CD4-positive, alpha-beta T cell (primary cell): ENCODE measurements at regions of chr6 and their contacts with region 1.

Region 1: GRCh38 chr6:42745707-42746462 is at the start of gene TBCC:
- DNase-seq: peak; percentile 86 to 98 (median 92)
- ATAC-seq: peak; percentile 77
- H3K4me3 ChIP-seq: peak within 1 kb of the TSS; percentile 96
- H3K4me3 Mint-ChIP-seq: peak within 1 kb of the TSS; percentile 100
- H3K27ac ChIP-seq: peak within 1 kb of the TSS; percentile 89 to 94
- H3K27ac Mint-ChIP-seq: peak within 1 kb of the TSS; percentile 96
- H3K4me1 ChIP-seq: peaks cover 43% of the 10 kb centered on the region
- H3K4me1 Mint-ChIP-seq: peaks cover 35% of the 10 kb centered on the region
- H3K27me3 ChIP-seq: no peaks in the 10 kb centered on the region
- H3K27me3 Mint-ChIP-seq: no peaks in the 10 kb centered on the region
- CTCF ChIP-seq: no peak
- total RNA-seq, gene TBCC: 67.3 to 68.3 TPM

Region 2: GRCh38 chr6:42661540-42662153 is 84.2 kb before region 1 on chr6:
- CTCF ChIA-PET with region 1: interaction called, 5 read pairs
- POLR2A ChIA-PET with region 1: interaction called, 16 read pairs
- intact Hi-C with region 1: no loop called
- DNase-seq: peak; percentile 75 to 91 (median 85)
- ATAC-seq: peak; percentile 100
- H3K4me3 ChIP-seq: no peak overlapping the region
- H3K4me3 Mint-ChIP-seq: no peak overlapping the region
- H3K27ac ChIP-seq: no peak overlapping the region
- H3K27ac Mint-ChIP-seq: no peak overlapping the region
- H3K4me1 ChIP-seq: no peaks in the 10 kb centered on the region
- H3K4me1 Mint-ChIP-seq: no peaks in the 10 kb centered on the region
- H3K27me3 ChIP-seq: no peaks in the 10 kb centered on the region
- H3K27me3 Mint-ChIP-seq: no peaks in the 10 kb centered on the region
- CTCF ChIP-seq: peak; percentile 90

Region 3: DNA sequence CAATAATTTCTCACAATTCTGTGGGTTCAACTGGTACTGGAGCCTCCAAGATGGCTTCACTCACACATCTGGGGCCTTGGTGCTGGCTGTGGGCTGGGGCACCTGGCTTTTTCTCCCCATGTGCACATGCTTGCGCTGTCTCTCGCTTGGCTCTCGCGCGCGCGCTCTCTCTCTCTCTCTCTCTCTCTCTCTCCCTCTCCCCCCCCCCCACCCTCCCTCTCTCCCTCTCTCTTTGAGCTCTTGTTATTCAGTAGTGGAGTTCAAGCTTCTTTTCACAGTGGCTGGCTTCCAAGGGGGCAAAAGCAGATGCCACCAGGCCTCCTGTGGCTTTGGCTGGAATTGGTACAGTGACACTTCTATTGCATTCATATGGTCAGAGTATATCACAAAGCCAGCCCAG is 10.8 kb after region 1 on chr6:
- CTCF ChIA-PET with region 1: interaction called, 4 read pairs
- POLR2A ChIA-PET with region 1: interaction called, 61 read pairs
- intact Hi-C with region 1: no loop called
- DNase-seq: no peak
- ATAC-seq: no peak
- H3K4me3 ChIP-seq: no peak overlapping the region
- H3K4me3 Mint-ChIP-seq: no peak overlapping the region
- H3K27ac ChIP-seq: no peak overlapping the region
- H3K27ac Mint-ChIP-seq: no peak overlapping the region
- H3K4me1 ChIP-seq: peaks cover 7% of the 10 kb centered on the region
- H3K4me1 Mint-ChIP-seq: peaks cover 57% of the 10 kb centered on the region
- H3K27me3 ChIP-seq: no peaks in the 10 kb centered on the region
- H3K27me3 Mint-ChIP-seq: no peaks in the 10 kb centered on the region
- CTCF ChIP-seq: no peak

Region 4: DNA sequence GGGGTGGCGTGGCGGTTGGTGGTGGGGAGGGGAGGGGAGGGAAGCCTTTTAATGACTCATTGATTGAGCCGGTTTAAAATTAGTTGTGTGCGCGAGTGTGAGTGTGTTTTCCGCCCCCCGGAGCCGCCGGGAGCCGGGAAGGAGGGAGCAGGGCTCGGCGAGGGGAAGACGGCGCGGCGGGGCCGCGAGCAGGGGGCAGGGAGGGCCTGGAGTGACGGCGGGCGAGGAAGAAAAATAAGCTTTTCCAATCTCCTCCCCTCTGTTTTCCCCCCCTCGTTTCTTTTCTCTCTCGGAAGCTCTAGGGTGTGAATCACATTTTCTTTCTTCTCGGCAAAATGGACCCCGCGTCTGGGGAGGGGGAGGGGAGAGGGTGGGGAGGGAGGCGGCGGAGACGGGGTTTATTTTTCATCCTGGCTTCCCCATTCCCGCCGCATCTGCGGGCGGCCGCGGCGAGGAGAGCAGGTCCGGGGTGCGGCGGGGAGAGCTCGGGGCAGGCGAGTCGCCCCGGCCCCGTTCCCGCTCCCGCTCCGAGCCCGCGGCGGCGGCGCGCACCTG is 36.8 kb after region 1 on chr6:
- CTCF ChIA-PET with region 1: interaction called, 6 read pairs
- POLR2A ChIA-PET with region 1: interaction called, 1,427 read pairs
- intact Hi-C with region 1: loop called (anchors 1 kb)
- DNase-seq: peak; percentile 69 to 90 (median 77)
- ATAC-seq: peak; percentile 60
- H3K4me3 ChIP-seq: peak overlapping the region; percentile 81
- H3K4me3 Mint-ChIP-seq: peak overlapping the region; percentile 100
- H3K27ac ChIP-seq: peak overlapping the region; percentile 100
- H3K27ac Mint-ChIP-seq: no peak overlapping the region
- H3K4me1 ChIP-seq: peaks cover 51% of the 10 kb centered on the region
- H3K4me1 Mint-ChIP-seq: peaks cover 30% of the 10 kb centered on the region
- H3K27me3 ChIP-seq: no peaks in the 10 kb centered on the region
- H3K27me3 Mint-ChIP-seq: no peaks in the 10 kb centered on the region
- CTCF ChIP-seq: no peak

Region 5: DNA sequence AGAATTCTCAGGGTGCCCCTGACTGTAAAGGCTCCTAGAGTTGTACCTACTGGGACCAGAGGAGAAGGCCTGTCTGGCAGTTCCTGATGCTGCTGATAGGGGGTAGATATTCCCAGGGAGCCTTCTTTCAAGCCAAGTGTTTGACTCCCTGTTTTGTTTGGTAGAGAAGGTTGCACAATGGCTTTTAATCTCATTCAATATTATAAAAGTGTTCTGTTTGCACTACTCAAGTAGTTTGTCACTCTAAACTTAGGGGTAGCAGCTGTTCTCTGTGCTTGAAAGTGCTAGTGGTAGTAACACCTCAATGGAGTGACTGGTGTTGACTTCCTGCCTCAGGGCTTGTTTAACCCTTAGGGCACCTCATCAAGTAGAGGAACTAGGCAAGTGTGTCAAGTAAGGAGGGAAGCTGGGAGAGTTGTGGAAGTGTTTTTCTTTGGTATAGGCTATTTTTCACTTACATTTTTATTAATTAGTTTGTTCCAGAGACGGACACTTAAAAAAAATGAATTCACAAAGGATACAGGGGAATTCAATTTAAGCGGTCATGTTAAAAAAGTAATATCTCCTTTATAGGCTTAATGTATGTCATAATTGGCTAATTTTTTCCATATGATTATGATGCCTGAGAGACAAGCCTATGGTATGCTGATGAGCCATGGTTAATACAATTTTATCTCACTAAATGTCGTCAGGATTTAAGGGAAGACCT is 74.1 kb after region 1 on chr6:
- CTCF ChIA-PET with region 1: no interaction called
- POLR2A ChIA-PET with region 1: interaction called, 33 read pairs
- intact Hi-C with region 1: loop called in 1 of 2 experiments (anchors 10 kb)
- DNase-seq: peak in 5 of 14 experiments; percentile 1 to 51 (median 35)
- ATAC-seq: peak; percentile 78
- H3K4me3 ChIP-seq: no peak overlapping the region
- H3K4me3 Mint-ChIP-seq: no peak overlapping the region
- H3K27ac ChIP-seq: no peak overlapping the region
- H3K27ac Mint-ChIP-seq: peak overlapping the region; percentile 86
- H3K4me1 ChIP-seq: peaks cover 7% of the 10 kb centered on the region
- H3K4me1 Mint-ChIP-seq: peaks cover 39% of the 10 kb centered on the region
- H3K27me3 ChIP-seq: no peaks in the 10 kb centered on the region
- H3K27me3 Mint-ChIP-seq: no peaks in the 10 kb centered on the region
- CTCF ChIP-seq: no peak

Region 6: GRCh38 chr6:42984001-42984923 is 238.4 kb after region 1 on chr6 and contains the start of gene PPP2R5D:
- CTCF ChIA-PET with region 1: no interaction called
- POLR2A ChIA-PET with region 1: interaction called, 15 read pairs
- intact Hi-C with region 1: no loop called
- DNase-seq: peak; percentile 93 to 99 (median 96)
- ATAC-seq: peak; percentile 90
- H3K4me3 ChIP-seq: peak within 1 kb of the TSS; percentile 81
- H3K4me3 Mint-ChIP-seq: peak within 1 kb of the TSS; percentile 93
- H3K27ac ChIP-seq: peak within 1 kb of the TSS; percentile 73 to 77
- H3K27ac Mint-ChIP-seq: peak within 1 kb of the TSS; percentile 96
- H3K4me1 ChIP-seq: peaks cover 56% of the 10 kb centered on the region
- H3K4me1 Mint-ChIP-seq: peaks cover 67% of the 10 kb centered on the region
- H3K27me3 ChIP-seq: no peaks in the 10 kb centered on the region
- H3K27me3 Mint-ChIP-seq: no peaks in the 10 kb centered on the region
- CTCF ChIP-seq: no peak
- total RNA-seq, gene PPP2R5D: 15.3 to 17.5 TPM